Naive thymus-derived CD4-positive, alpha-beta T cell (primary cell): ENCODE measurements at regions of chr18 and their contacts with region 1.

Region 1: DNA sequence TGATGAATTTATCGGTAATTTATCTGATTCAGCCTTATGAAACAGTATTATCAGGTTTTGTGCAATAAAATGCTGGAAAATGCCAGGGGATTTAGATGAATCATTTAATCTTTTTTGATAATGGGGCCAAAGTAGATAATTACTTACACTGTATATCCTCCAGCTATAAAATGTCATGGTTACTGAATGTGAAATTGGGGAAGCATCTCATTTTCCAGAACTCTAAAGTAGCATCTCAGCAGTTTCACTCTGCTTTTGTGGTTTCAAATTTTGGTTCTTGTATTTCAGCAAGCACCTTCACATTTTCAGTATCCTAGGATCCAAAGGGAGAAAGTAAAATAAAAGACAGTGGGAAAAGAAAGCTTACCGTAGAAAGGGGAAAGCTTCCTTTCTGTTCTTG is 12.8 kb downstream of the ANKRD62 start:
- DNase-seq: no peak
- ATAC-seq: no peak
- H3K4me3 ChIP-seq: no peak overlapping the region
- H3K4me3 Mint-ChIP-seq: no peak overlapping the region
- H3K27ac ChIP-seq: no peak overlapping the region
- H3K27ac Mint-ChIP-seq: no peak overlapping the region
- H3K4me1 ChIP-seq: no peaks in the 10 kb centered on the region
- H3K4me1 Mint-ChIP-seq: no peaks in the 10 kb centered on the region
- H3K27me3 ChIP-seq: no peaks in the 10 kb centered on the region
- H3K27me3 Mint-ChIP-seq: peaks cover 22 to 54% (median 36%) of the 10 kb centered on the region in 5 donors

Region 2: DNA sequence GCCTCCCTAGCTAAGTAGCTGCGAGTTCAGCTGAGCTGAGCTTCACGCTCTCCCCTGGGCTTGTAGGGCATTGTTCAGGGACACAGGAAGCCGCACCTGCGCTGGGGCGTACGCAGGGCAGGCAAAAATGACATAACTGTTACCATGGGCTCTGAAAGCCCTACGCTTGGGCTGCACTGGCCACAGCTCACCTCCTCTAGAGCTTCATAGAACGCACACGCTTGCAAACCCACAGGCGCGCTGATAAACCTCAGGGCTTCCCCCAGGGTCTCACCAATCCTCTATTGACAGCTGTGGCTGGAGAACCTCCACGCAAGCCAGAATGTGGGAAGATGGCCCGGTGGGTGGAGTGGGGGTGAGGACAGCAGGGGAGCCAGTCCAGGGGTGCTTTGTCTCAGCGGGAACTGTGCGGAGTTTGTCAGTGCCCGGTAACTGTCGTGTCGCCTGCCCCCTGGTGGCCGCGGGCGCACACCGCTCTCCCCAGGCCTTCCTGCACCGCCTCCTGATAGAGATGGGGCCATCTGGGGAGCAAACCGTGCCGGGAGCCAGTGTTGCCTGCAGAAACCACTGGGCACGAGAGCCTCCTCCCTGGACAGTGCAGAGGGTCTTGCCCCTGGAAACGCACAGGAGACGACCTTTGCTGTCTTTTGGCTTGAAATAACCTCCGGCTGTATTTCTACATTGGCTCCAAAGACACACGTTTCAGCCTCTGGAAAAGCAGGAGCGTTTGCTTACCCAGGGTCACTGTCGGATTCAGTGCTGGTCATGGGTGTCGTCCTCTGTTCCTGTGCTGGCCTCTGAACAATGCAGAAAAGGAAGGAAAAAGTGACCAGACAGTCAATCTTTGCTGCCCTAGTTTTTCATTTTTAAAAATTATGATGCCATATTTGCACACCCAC is 130.7 kb after region 1 on chr18:
- CTCF ChIA-PET with region 1: no interaction called
- POLR2A ChIA-PET with region 1: no interaction called
- intact Hi-C with region 1: loop called in 1 of 2 experiments (anchors 10 kb)
- DNase-seq: peak in 7 of 9 donors; percentile 24 to 78 (median 49)
- ATAC-seq: peak; percentile 86
- H3K4me3 ChIP-seq: no peak overlapping the region
- H3K4me3 Mint-ChIP-seq: no peak overlapping the region
- H3K27ac ChIP-seq: no peak overlapping the region
- H3K27ac Mint-ChIP-seq: no peak overlapping the region
- H3K4me1 ChIP-seq: no peaks in the 10 kb centered on the region
- H3K4me1 Mint-ChIP-seq: peaks cover 0 to 5% (median 0%) of the 10 kb centered on the region in 7 donors
- H3K27me3 ChIP-seq: no peaks in the 10 kb centered on the region
- H3K27me3 Mint-ChIP-seq: peaks cover 16 to 42% (median 36%) of the 10 kb centered on the region in 5 donors